ENCODE measurements at regions of chr12 and their contacts with region 1.

Region 1: GRCh38 chr12:128771681-128772080 is 52.1 kb downstream of the SLC15A4 start:
- DNase-seq: no peak
- ATAC-seq: no peak
- H3K4me3 ChIP-seq: no peak overlapping the region
- H3K27ac ChIP-seq: no peak overlapping the region
- H3K4me1 ChIP-seq: no peaks in the 10 kb centered on the region
- CTCF ChIP-seq: no peak
- EP300 ChIP-seq: no peak
- POLR2A ChIP-seq: no peak
- RAD21 ChIP-seq: no peak

Region 2: DNA sequence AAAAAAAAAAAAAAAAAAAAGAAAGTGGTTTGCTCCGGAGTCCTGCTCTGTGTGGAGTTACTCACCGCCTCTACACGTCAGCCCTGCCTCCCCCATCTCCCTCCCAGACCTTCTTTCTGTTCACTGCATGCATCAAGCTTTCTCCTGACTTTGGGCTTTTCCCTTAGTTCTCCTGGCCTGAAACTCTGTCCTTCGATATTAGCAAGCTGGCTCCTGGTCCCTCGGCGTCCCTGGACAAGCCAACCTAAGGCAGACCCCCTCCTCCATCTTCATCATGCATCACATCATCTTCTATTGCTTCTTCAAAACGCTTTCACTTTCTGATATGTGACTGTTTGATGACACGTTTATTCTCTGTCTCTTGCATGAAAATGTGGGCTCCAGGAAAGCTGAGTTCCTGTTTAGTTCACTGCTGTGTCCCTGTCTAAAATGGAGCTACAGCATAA is 11.5 kb after region 1 on chr12:
- CTCF ChIA-PET with region 1: interaction called, 14 read pairs
- POLR2A ChIA-PET with region 1: no interaction called
- DNase-seq: no peak
- ATAC-seq: peak in 1 of 2 experiments; percentile 32; a peak in 3 of 6 replicates
- H3K4me3 ChIP-seq: no peak overlapping the region
- H3K27ac ChIP-seq: no peak overlapping the region
- H3K4me1 ChIP-seq: no peaks in the 10 kb centered on the region
- CTCF ChIP-seq: no peak
- EP300 ChIP-seq: no peak
- POLR2A ChIP-seq: no peak
- RAD21 ChIP-seq: no peak

Measured in A549 (cell line).